ENCODE measurements at regions of chr4 and their contacts with region 1.

Region 1: GRCh38 chr4:147866532-147867271 is 134.8 kb downstream of the ARHGAP10 start:
- DNase-seq: peak; percentile 92 to 98 (median 95)
- H3K4me3 ChIP-seq: no peak overlapping the region
- H3K27ac ChIP-seq: peak overlapping the region in 1 of 2 donors; percentile 53
- H3K4me1 ChIP-seq: peaks cover 16% of the 10 kb centered on the region
- H3K27me3 ChIP-seq: no peaks in the 10 kb centered on the region
- CTCF ChIP-seq: peak; percentile 98 to 100 (median 100)
- EP300 ChIP-seq: no peak
- POLR2A ChIP-seq: peak; percentile 35

Region 2: GRCh38 chr4:147707865-147708672 is 158.6 kb before region 1 on chr4:
- intact Hi-C with region 1: loop called (anchors 1 to 5 kb)
- DNase-seq: peak in 4 of 5 donors; percentile 43 to 71 (median 50)
- H3K4me3 ChIP-seq: no peak overlapping the region
- H3K27ac ChIP-seq: no peak overlapping the region
- H3K4me1 ChIP-seq: peaks cover 3% of the 10 kb centered on the region
- H3K27me3 ChIP-seq: no peaks in the 10 kb centered on the region
- CTCF ChIP-seq: peak; percentile 72 to 94 (median 92)
- EP300 ChIP-seq: no peak
- POLR2A ChIP-seq: no peak

Region 3: GRCh38 chr4:147714575-147715401 is 151.9 kb before region 1 on chr4:
- intact Hi-C with region 1: loop called in 2 of 4 experiments (anchors 5 kb)
- DNase-seq: no peak
- H3K4me3 ChIP-seq: no peak overlapping the region
- H3K27ac ChIP-seq: no peak overlapping the region
- H3K4me1 ChIP-seq: no peaks in the 10 kb centered on the region
- H3K27me3 ChIP-seq: no peaks in the 10 kb centered on the region
- CTCF ChIP-seq: no peak
- EP300 ChIP-seq: no peak
- POLR2A ChIP-seq: no peak

Region 4: DNA sequence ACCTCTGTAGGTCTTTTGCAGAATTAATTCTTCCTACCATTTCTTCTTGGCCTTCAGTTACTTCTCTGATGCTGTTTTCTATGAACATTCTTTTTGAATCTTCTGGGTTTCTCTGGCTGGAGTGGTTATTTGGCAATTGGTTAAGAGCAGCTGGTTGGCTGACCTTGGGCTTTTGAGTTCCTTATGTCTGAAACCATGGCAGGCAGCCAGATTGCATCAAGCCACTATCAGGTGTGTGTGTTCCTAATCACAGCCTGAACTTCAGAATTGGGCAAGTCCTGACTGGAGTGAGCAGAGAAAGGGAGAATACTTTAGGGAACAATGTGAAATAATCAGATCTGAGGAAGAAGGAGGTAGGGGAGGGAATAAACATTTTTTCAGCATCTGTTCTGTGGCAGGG is 44.6 kb before region 1 on chr4:
- intact Hi-C with region 1: loop called in 1 of 4 experiments (anchors 5 kb)
- DNase-seq: peak; percentile 85 to 97 (median 96)
- H3K4me3 ChIP-seq: no peak overlapping the region
- H3K27ac ChIP-seq: peak overlapping the region in 1 of 2 donors; percentile 54
- H3K4me1 ChIP-seq: peaks cover 23% of the 10 kb centered on the region
- H3K27me3 ChIP-seq: no peaks in the 10 kb centered on the region
- CTCF ChIP-seq: no peak
- EP300 ChIP-seq: no peak
- POLR2A ChIP-seq: no peak